ENCODE measurements at regions of chr1 and their contacts with region 1.

Region 1: GRCh38 chr1:11813021-11813420 is 7.0 kb downstream of the CLCN6 start:
- DNase-seq: no peak

Region 2: GRCh38 chr1:11862890-11863289 is 49.9 kb after region 1 on chr1:
- in situ Hi-C with region 1: loop called (anchors 10 kb)
- DNase-seq: no peak

Measured in G401 (cell line).